ENCODE measurements at regions of chr19 and their contacts with region 1.

Region 1: DNA sequence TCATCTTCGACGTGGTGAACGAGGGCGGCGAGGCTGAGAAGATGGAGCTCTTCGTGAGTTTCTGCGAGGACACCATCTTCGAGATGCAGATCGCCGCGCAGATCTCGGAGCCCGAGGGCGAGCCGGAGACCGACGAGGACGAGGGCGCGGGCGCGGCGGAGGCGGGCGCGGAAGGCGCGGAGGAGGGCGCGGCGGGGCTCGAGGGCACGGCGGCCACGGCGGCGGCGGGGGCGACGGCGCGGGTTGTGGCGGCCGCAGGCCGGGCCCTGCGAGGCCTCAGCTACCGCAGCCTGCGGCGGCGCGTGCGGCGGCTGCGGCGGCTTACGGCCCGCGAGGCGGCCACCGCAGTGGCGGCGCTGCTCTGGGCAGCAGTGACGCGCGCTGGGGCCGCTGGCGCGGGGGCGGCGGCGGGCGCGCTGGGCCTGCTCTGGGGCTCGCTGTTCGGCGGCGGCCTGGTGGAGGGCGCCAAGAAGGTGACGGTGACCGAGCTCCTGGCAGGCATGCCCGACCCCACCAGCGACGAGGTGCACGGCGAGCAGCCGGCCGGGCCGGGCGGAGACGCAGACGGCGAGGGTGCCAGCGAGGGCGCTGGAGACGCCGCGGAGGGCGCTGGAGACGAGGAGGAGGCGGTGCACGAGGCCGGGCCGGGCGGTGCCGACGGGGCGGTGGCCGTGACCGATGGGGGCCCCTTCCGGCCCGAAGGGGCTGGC is 52.6 kb downstream of the MAP4K1 start:
- DNase-seq: no peak
- ATAC-seq: no peak
- H3K4me3 ChIP-seq: no peak overlapping the region
- H3K27ac ChIP-seq: no peak overlapping the region
- H3K4me1 ChIP-seq: no peaks in the 10 kb centered on the region
- H3K27me3 ChIP-seq: no peaks in the 10 kb centered on the region
- CTCF ChIP-seq: no peak
- POLR2A ChIP-seq: no peak

Region 2: DNA sequence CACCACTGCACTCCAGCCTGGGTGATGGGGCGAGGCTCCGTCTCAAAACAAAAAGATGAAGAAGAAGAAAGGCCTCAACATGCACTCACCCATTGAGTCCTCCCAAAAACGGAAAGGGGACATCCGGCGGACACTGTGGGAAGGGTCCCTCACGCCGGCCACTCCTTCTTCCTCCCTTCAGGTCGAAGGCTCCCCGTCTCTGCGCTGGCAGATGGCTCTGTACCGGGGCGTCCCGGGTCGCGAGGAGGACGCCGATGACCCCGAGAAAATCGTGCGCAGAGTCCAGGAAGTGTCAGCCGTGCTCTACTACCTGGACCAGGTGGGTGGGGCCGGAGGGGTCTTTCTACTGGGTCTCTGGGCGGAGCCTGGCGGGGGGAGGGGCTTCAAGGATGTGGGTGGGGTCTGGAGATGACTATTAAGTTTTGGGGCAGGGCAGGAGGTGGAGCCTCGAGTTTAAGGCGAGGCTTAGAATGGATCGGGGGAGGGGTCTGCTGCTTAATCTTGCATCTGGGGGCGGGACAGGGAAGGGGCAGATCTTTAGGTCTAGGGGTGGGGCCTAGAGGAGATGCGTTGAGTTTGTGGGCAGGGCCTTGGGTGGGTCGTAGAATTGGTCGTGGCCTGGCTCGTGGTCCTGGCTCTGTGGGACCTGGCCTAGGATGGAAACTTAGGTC is 37.5 kb before region 1 on chr19:
- in situ Hi-C with region 1: no loop called
- intact Hi-C with region 1: loop called (anchors 5 kb)
- DNase-seq: no peak
- ATAC-seq: no peak
- H3K4me3 ChIP-seq: no peak overlapping the region
- H3K27ac ChIP-seq: peak overlapping the region in 2 of 4 donors; percentile 34 to 45
- H3K4me1 ChIP-seq: no peaks in the 10 kb centered on the region
- H3K27me3 ChIP-seq: no peaks in the 10 kb centered on the region
- CTCF ChIP-seq: no peak
- POLR2A ChIP-seq: no peak

Measured in gastrocnemius medialis (tissue), 4 donors.